Mammary epithelial cell (primary cell): ENCODE measurements at regions of chr4 and their contacts with region 1.

Region 1: GRCh38 chr4:165131247-165131832 is 18.7 kb upstream of the TMEM192 start:
- DNase-seq: peak; percentile 45
- H3K4me3 ChIP-seq: no peak overlapping the region
- H3K27ac ChIP-seq: no peak overlapping the region
- H3K4me1 ChIP-seq: no peaks in the 10 kb centered on the region
- H3K27me3 ChIP-seq: no peaks in the 10 kb centered on the region
- CTCF ChIP-seq: peak; percentile 92 to 94

Region 2: DNA sequence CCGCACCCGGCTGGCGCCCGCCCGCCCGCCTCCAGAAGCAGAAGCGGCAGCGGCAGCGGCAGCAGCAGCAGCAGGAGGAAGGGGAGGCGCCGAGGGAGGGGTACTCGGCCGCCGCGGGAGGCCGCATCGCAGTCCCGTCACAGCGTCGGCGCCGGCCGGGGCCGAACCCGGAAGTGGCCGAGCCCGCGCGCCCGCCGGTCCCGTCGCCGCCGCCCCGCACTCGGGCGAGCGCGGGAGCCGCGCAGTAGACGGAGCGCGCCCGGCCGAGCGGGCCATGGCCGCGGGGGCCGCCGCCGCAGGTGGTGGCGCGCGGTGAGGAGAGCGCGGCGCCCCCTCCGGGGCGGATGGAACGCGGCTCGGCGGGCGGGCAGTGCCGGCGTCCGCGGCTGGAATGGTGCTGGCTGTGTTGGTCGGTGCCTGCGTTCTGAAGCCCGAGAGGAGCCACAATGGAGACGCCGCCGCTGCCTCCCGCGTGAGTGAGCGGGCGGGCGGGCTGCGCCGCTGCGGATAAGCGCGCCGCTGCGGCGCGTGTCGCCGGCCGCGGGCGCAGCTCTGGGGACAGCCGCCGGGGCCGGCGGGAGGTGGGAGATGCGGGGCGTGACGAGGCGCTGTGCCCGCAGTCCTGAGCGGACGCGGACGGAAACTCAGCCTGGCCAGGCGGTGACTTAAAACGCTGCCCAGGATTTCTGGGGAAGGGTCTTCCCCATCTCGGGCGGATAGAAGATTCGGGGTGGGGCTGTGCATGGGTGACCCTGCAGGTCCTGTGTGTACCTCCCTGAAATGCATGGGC is 76.3 kb after region 1 on chr4 and contains the start of gene KLHL2:
- CTCF ChIA-PET with region 1: no interaction called
- dilution Hi-C with region 1: no loop called
- in situ Hi-C with region 1: no loop called
- intact Hi-C with region 1: loop called (anchors 1 kb)
- DNase-seq: peak; percentile 59
- H3K4me3 ChIP-seq: peak within 1 kb of the TSS; percentile 82 to 91 (median 89)
- H3K27ac ChIP-seq: peak within 1 kb of the TSS; percentile 59
- H3K4me1 ChIP-seq: peaks cover 53% of the 10 kb centered on the region
- H3K27me3 ChIP-seq: no peaks in the 10 kb centered on the region
- CTCF ChIP-seq: no peak
- total RNA-seq, gene KLHL2: 23.7 to 24.2 TPM

Region 3: GRCh38 chr4:165288639-165289422 is 157.5 kb after region 1 on chr4:
- CTCF ChIA-PET with region 1: interaction called, 18 read pairs
- dilution Hi-C with region 1: no loop called
- in situ Hi-C with region 1: no loop called
- intact Hi-C with region 1: loop called (anchors 1 kb)
- DNase-seq: peak; percentile 69
- H3K4me3 ChIP-seq: no peak overlapping the region
- H3K27ac ChIP-seq: no peak overlapping the region
- H3K4me1 ChIP-seq: peaks cover 10% of the 10 kb centered on the region
- H3K27me3 ChIP-seq: no peaks in the 10 kb centered on the region
- CTCF ChIP-seq: no peak

Region 4: DNA sequence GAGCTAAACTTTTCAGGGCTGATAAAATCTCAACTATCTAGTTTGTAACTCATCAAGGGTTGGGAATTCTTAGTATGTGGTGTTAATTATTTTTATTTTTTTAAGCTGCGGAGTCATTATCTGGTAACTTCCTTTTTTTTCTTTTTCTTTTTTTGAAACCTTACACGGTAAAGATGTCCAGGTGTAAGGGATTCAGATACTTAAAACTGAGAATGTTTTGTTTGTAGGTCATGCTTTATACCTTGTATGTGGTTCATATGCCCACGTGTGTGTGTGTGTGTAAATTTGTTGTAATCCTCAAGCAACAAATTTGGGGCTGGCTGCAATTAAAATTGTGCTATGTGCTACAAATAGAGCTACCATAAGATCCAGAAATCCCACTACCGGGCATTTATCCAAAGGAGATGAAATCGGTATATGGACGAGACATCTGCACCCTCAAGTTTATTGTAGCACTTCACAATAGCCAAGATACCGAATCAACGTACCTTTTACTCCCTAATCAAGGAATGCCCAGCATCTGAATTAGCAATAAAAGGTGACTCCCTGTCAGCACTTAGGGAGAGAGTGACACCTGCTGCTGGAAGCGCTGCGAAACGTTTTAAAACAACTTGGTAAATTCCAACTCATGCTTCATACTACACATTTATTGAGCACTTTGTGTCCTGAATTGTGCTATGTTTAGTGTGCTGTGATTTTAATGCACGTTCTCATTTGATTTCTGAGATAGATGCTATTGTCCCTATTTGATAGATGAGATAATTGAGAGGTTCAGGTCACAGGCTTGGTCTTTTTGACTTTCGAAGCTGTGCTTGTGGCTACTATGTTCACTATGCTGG is 212.2 kb after region 1 on chr4:
- CTCF ChIA-PET with region 1: interaction called, 10 read pairs
- dilution Hi-C with region 1: no loop called
- in situ Hi-C with region 1: no loop called
- intact Hi-C with region 1: no loop called
- DNase-seq: no peak
- H3K4me3 ChIP-seq: no peak overlapping the region
- H3K27ac ChIP-seq: no peak overlapping the region
- H3K4me1 ChIP-seq: no peaks in the 10 kb centered on the region
- H3K27me3 ChIP-seq: no peaks in the 10 kb centered on the region
- CTCF ChIP-seq: peak in 1 of 2 donors; percentile 25

Region 5: DNA sequence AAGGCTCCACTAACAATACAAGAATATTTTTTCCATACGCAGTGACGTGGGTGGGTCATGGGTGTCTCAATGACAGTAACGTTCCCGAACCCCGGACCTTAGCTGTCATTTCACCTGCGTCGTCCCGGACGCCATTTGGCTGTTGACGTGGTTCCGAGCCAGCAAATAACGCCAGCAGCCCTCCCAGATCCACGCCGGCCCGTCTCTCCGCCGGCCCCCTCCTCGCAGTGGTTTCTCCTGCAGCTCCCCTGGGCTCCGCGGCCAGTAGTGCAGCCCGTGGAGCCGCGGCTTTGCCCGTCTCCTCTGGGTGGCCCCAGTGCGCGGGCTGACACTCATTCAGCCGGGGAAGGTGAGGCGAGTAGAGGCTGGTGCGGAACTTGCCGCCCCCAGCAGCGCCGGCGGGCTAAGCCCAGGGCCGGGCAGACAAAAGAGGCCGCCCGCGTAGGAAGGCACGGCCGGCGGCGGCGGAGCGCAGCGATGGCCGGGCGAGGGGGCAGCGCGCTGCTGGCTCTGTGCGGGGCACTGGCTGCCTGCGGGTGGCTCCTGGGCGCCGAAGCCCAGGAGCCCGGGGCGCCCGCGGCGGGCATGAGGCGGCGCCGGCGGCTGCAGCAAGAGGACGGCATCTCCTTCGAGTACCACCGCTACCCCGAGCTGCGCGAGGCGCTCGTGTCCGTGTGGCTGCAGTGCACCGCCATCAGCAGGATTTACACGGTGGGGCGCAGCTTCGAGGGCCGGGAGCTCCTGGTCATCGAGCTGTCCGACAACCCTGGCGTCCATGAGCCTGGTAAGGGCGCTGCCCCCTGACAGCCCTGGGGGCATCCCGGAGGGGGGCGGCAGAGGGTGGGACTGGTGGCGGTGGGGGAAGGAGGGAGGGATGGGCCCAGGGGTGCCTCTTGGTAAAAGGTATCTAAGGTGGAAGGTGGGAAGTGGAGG is 247.7 kb after region 1 on chr4 and contains the start of gene CPE:
- CTCF ChIA-PET with region 1: no interaction called
- dilution Hi-C with region 1: no loop called
- in situ Hi-C with region 1: no loop called
- intact Hi-C with region 1: no loop called
- DNase-seq: peak; percentile 78
- H3K4me3 ChIP-seq: peak within 1 kb of the TSS; percentile 47 to 54 (median 54)
- H3K27ac ChIP-seq: no peak within 1 kb of the TSS
- H3K4me1 ChIP-seq: peaks cover 13% of the 10 kb centered on the region
- H3K27me3 ChIP-seq: no peaks in the 10 kb centered on the region
- CTCF ChIP-seq: peak; percentile 41 to 71
- total RNA-seq, gene CPE: 10.0 to 19.8 TPM

Region 6: DNA sequence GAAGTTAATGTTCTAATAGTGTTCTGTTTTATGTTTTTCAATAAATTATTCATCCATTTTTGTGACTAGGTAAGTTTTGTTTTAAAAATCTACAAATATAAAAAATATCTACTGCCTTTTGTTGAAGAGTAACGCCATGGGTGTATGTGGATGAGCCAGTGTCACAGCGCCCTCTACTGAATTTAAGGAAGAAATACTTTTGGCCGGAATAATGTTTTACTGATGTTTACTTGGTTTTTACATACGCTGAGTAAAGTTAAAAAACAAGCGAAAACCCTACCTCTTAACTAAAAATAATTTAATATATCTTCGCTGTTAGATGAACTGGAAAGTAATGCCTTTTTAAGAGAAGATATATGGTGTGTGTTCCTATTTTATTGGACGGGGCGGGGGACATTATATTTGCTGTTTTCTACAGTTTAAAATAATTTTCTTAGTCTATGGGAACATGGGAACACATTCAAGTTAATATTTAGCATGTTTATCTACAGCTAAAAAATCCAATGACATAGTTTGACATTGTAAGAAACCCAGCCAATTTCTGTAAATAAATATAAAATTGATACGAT is 333.6 kb after region 1 on chr4:
- CTCF ChIA-PET with region 1: no interaction called
- dilution Hi-C with region 1: loop called (anchors 25 kb)
- in situ Hi-C with region 1: loop called (anchors 5 kb)
- intact Hi-C with region 1: loop called (anchors 1 kb)
- DNase-seq: no peak
- H3K4me3 ChIP-seq: peak overlapping the region in 1 of 3 experiments; percentile 21
- H3K27ac ChIP-seq: no peak overlapping the region
- H3K4me1 ChIP-seq: peaks cover 8% of the 10 kb centered on the region
- H3K27me3 ChIP-seq: no peaks in the 10 kb centered on the region
- CTCF ChIP-seq: peak; percentile 71 to 76

Region 7: GRCh38 chr4:165692082-165692481 is 560.7 kb after region 1 on chr4:
- CTCF ChIA-PET with region 1: no interaction called
- dilution Hi-C with region 1: no loop called
- in situ Hi-C with region 1: no loop called
- intact Hi-C with region 1: no loop called
- DNase-seq: no peak
- H3K4me3 ChIP-seq: no peak overlapping the region
- H3K27ac ChIP-seq: no peak overlapping the region
- H3K4me1 ChIP-seq: no peaks in the 10 kb centered on the region
- H3K27me3 ChIP-seq: no peaks in the 10 kb centered on the region
- CTCF ChIP-seq: no peak

Region 8: DNA sequence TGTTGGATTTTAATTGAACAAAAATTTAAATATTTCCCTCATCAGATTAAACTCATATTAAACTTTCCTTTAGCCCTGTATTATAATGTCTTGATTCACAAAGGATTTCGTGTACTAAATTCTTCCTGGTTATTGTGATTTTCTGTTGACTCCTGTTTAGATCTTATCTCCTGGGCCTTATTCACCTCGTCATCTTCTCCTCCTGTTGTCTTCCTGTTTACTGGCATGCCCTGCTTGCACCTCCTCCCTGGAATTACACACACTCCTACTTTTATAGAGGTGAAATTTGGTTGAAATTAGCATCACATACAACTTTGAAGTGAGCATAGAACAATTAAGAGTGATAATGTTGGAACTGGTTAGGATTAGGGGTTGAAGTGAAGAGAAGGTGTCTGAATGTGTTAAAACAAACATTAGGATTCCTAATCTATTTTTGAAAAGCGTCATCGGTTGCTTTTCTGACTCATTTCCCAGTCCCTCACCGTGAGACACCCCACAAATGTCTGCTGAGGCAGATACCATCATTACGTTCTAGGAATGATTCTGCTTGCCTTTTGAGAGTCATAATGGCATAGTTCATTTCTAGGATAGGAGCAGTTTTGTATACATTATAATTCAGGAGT is 774.2 kb after region 1 on chr4:
- CTCF ChIA-PET with region 1: no interaction called
- dilution Hi-C with region 1: no loop called
- in situ Hi-C with region 1: no loop called
- intact Hi-C with region 1: no loop called
- DNase-seq: no peak
- H3K4me3 ChIP-seq: no peak overlapping the region
- H3K27ac ChIP-seq: no peak overlapping the region
- H3K4me1 ChIP-seq: no peaks in the 10 kb centered on the region
- H3K27me3 ChIP-seq: no peaks in the 10 kb centered on the region
- CTCF ChIP-seq: no peak

Region 9: DNA sequence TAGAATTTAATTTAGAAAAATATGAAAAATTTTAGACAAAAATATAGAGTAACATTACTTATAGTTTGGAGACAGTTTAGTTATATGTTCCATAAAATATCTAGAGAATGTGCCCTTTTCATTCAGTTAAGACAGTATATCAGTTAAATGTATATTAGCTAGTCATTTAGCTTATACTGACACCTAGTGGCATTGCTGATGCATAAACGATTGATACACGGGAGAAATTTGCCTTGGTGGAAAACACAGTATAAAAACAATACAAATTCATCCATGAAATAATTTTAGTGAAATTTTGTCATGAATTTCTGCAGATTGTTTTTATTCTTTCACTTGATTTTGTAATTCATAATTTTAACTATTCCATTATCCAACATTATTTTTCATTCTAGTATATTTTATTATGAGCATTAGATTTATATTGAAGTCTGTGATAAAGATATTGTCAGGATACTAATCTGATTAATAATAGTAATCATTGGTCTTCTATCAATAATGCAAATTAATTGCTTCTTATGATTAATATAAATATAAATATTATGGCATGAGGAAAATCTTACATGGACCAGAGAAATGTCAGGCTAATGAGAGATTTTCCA is 960.7 kb after region 1 on chr4:
- CTCF ChIA-PET with region 1: interaction called, 7 read pairs
- dilution Hi-C with region 1: no loop called
- in situ Hi-C with region 1: no loop called
- intact Hi-C with region 1: loop called (anchors 5 kb)
- DNase-seq: peak; percentile 17
- H3K4me3 ChIP-seq: no peak overlapping the region
- H3K27ac ChIP-seq: no peak overlapping the region
- H3K4me1 ChIP-seq: no peaks in the 10 kb centered on the region
- H3K27me3 ChIP-seq: no peaks in the 10 kb centered on the region
- CTCF ChIP-seq: peak; percentile 73 to 74